ENCODE measurements at regions of chr11 and their contacts with region 1.

Region 1: GRCh38 chr11:6402561-6402981 is 12.3 kb downstream of the SMPD1 start:
- DNase-seq: no peak

Region 2: DNA sequence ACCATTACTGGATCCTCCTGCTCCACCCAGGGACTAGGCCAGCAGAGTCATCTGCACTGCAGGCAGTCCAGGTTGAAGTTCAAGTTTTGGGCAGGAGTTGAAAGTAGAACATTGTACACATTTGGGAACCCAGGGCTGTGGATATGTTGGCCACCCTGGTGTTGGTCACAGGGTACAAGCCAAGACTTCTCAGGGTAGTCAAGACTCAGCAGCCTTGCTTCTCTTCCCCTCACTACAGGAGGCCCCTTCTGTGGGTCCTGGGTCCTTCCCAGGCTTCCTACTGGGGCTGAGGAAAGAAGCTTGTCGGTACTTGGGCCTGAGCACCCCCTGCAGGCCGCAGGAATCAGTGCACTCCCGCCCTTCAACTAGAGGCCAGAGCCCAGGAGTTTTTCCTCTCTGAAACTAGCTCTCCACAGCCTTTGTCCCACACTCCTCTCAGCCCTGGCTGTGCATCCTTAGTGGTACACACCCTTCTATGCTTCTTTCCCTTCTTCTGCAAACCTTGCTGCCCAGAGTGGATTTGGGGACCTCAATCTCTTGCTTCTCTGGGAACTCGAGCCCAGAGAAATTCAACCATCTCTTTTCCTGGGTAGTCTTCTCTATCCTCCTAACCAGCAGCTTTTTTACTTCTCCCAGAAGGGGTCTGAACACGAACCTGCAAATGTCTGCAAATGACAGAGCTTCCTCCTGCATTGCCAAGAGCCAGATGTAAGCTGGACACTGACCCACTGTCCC is 40.9 kb after region 1 on chr11:
- in situ Hi-C with region 1: loop called (anchors 5 kb)
- DNase-seq: peak; percentile 67

Measured in G401 (cell line).